PC-9 (cell line): ENCODE measurements at regions of chr4 and their contacts with region 1.

Region 1: DNA sequence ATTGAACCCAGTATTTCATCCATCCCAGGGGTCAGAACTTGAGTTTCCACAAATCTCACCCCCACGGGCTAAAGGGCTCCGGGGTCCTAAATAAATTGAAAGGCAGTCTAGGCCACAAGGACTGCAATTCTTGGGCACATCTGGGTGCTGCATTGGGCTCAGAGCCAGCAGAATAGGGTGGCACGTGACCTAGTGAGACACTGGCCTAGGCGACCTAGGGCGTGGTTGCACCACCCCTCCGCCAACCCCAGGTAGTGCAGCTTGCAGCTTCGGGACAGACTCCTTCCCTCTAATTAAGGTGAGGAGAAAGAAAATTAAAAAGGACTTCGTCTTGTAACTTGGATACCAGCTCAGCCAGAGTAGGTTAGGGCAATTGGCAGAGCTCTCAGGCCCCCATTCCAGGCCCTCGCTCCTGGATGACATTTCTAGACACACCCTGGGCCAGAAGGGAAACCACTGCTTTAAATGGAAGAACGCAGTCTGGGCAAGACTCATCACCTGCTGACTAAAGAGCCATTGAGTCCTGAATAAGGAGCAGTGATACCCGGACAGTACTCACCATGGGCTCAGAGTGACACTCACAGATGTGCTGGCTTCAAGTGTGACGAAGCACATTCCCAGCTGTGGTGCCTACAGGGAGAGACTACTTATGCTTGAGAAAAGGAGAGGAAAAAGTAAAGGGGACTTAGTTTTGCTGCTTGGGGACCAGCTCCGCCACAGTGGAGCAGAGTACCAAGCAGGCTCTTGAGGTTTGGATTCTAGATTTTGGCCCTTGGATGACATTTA is 735.4 kb downstream of the FSTL5 start:
- DNase-seq: no peak
- H3K4me3 ChIP-seq: no peak overlapping the region
- H3K27ac ChIP-seq: no peak overlapping the region
- H3K4me1 ChIP-seq: no peaks in the 10 kb centered on the region
- H3K27me3 ChIP-seq: no peaks in the 10 kb centered on the region
- CTCF ChIP-seq: no peak

Region 2: GRCh38 chr4:161376275-161376674 is 52.1 kb before region 1 on chr4:
- CTCF ChIA-PET with region 1: no interaction called
- POLR2A ChIA-PET with region 1: no interaction called
- intact Hi-C with region 1: loop called (anchors 2 kb)
- DNase-seq: peak in 1 of 2 experiments; percentile 40
- H3K4me3 ChIP-seq: no peak overlapping the region
- H3K27ac ChIP-seq: no peak overlapping the region
- H3K4me1 ChIP-seq: peaks cover 8% of the 10 kb centered on the region; the same call in 1 of the 2 replicates
- H3K27me3 ChIP-seq: no peaks in the 10 kb centered on the region
- CTCF ChIP-seq: no peak